ENCODE measurements at regions of chr2 and their contacts with region 1.

Region 1: DNA sequence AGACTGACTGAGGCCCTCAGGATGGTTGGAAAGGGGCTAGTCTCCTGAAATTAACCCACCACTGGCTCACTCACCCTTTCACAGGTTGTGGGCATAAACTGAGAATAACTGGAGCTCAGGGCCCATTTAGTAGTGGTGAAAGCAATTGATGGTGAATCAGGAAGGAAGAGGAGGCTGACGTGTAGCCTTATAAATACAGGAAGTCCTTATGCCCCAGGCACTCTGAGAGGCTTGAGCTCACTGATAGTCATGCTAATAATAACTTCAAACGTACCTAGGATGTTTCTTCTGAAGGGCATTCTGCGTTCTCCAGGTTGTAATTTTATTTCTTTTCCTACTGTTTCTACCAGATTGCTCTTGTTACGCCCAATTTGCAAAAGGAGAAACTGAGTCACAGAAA is 328.4 kb downstream of the CLIP4 start:
- DNase-seq: no peak
- H3K4me3 ChIP-seq: no peak overlapping the region
- H3K27ac ChIP-seq: no peak overlapping the region
- H3K4me1 ChIP-seq: no peaks in the 10 kb centered on the region
- H3K27me3 ChIP-seq: no peaks in the 10 kb centered on the region
- CTCF ChIP-seq: no peak
- POLR2A ChIP-seq: no peak

Region 2: DNA sequence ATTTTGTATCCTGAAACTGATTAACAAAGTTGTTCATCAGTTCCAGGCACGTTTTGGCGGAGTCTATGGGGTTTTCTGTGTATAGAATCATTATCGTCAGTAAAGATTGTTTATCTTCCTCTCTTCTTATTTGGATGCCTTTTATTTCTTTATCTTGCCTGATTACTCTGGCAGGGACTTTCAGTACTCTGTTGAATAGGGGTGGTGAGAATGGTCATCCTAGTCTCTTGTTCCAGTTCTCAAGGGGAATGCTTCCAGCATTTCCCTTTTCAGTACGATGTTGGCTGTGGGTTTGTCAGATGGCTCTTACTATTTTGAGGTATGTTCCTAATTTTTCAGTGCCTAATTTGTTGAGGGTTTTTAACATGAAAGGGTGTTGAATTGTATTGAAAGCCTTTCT is 647.0 kb before region 1 on chr2:
- intact Hi-C with region 1: no loop called
- DNase-seq: no peak
- H3K4me3 ChIP-seq: no peak overlapping the region
- H3K27ac ChIP-seq: no peak overlapping the region
- H3K4me1 ChIP-seq: no peaks in the 10 kb centered on the region
- H3K27me3 ChIP-seq: no peaks in the 10 kb centered on the region
- CTCF ChIP-seq: no peak
- POLR2A ChIP-seq: no peak

Region 3: DNA sequence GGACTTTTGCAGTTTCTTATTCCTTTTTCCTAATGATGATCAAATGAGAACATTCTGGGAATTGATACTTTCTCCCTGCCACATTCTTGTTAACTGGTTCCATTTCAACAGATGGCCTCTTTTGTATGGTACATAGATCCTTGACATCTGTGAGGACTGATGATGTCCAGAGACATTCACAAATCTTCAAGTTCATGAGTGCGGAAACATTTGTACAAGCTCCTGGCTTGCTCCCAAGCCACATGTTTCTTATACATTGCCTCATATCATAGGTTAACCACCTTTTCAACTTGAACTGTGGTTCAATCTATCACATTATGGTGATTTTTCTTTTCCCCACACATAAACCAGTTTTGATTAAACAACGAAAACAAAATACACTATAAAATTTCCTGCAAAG is 61.1 kb before region 1 on chr2:
- intact Hi-C with region 1: loop called (anchors 2 kb)
- DNase-seq: no peak
- H3K4me3 ChIP-seq: no peak overlapping the region
- H3K27ac ChIP-seq: no peak overlapping the region
- H3K4me1 ChIP-seq: no peaks in the 10 kb centered on the region
- H3K27me3 ChIP-seq: no peaks in the 10 kb centered on the region
- CTCF ChIP-seq: no peak
- POLR2A ChIP-seq: no peak

Region 4: GRCh38 chr2:29469516-29469915 is 25.9 kb after region 1 on chr2:
- intact Hi-C with region 1: loop called (anchors 1 kb)
- DNase-seq: no peak
- H3K4me3 ChIP-seq: no peak overlapping the region
- H3K27ac ChIP-seq: no peak overlapping the region
- H3K4me1 ChIP-seq: no peaks in the 10 kb centered on the region
- H3K27me3 ChIP-seq: no peaks in the 10 kb centered on the region
- CTCF ChIP-seq: no peak
- POLR2A ChIP-seq: no peak

Region 5: GRCh38 chr2:29532436-29532835 is 88.8 kb after region 1 on chr2:
- intact Hi-C with region 1: no loop called
- DNase-seq: no peak
- H3K4me3 ChIP-seq: no peak overlapping the region
- H3K27ac ChIP-seq: no peak overlapping the region
- H3K4me1 ChIP-seq: no peaks in the 10 kb centered on the region
- H3K27me3 ChIP-seq: no peaks in the 10 kb centered on the region
- CTCF ChIP-seq: no peak
- POLR2A ChIP-seq: no peak

Region 6: DNA sequence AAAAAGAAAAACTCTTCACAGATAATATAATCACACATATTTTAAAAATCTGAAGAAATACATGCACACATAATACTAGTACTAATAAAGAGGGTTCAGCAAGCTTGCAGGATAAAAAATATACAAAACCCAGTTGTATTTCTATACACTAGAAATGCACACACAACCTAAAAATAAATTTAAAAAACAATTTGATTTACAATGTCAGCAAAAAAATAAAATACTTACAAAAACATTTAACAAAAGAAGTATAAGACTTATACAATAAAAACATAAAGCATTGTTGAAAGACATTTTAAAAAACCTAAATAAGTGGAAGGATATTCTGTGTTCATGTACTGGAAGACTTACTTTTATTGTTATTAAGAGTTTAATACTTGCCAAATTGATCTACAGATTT is 559.5 kb after region 1 on chr2:
- intact Hi-C with region 1: loop called (anchors 5 kb)
- DNase-seq: no peak
- H3K4me3 ChIP-seq: no peak overlapping the region
- H3K27ac ChIP-seq: no peak overlapping the region
- H3K4me1 ChIP-seq: no peaks in the 10 kb centered on the region
- H3K27me3 ChIP-seq: no peaks in the 10 kb centered on the region
- CTCF ChIP-seq: no peak
- POLR2A ChIP-seq: no peak